Natural killer cell (primary cell): ENCODE measurements at regions of chr15 and their contacts with region 1.

Region 1: GRCh38 chr15:30991255-30992072 is at the start of gene MTMR10:
- DNase-seq: peak; percentile 82 to 83
- ATAC-seq: peak; percentile 94 to 99 (median 95)
- H3K4me3 ChIP-seq: peak within 1 kb of the TSS; percentile 70
- H3K4me3 Mint-ChIP-seq: peak within 1 kb of the TSS; percentile 98
- H3K27ac ChIP-seq: peak within 1 kb of the TSS; percentile 78
- H3K27ac Mint-ChIP-seq: peak within 1 kb of the TSS; percentile 89 to 98
- H3K4me1 ChIP-seq: peaks cover 20% of the 10 kb centered on the region
- H3K4me1 Mint-ChIP-seq: peaks cover 27 to 31% of the 10 kb centered on the region in 2 donors
- H3K27me3 ChIP-seq: no peaks in the 10 kb centered on the region
- H3K27me3 Mint-ChIP-seq: no peaks in the 10 kb centered on the region
- CTCF ChIP-seq: no peak
- total RNA-seq, gene MTMR10: 46.3 to 64.5 (median 54.2) TPM

Region 2: GRCh38 chr15:31049682-31050615 is 58.5 kb after region 1 on chr15:
- intact Hi-C with region 1: loop called (anchors 10 kb)
- DNase-seq: no peak
- ATAC-seq: no peak
- H3K4me3 ChIP-seq: no peak overlapping the region
- H3K4me3 Mint-ChIP-seq: peak overlapping the region; percentile 77
- H3K27ac ChIP-seq: peak overlapping the region; percentile 49
- H3K27ac Mint-ChIP-seq: peak overlapping the region; percentile 29 to 41
- H3K4me1 ChIP-seq: peaks cover 26% of the 10 kb centered on the region
- H3K4me1 Mint-ChIP-seq: peaks cover 23% of the 10 kb centered on the region in 2 donors
- H3K27me3 ChIP-seq: no peaks in the 10 kb centered on the region
- H3K27me3 Mint-ChIP-seq: peaks cover 0 to 6% of the 10 kb centered on the region in 2 donors
- CTCF ChIP-seq: no peak

Region 3: GRCh38 chr15:31080591-31081014 is 89.1 kb after region 1 on chr15:
- intact Hi-C with region 1: loop called (anchors 5 kb)
- DNase-seq: peak; percentile 28 to 41
- ATAC-seq: peak; percentile 63 to 92 (median 91)
- H3K4me3 ChIP-seq: peak overlapping the region; percentile 41
- H3K4me3 Mint-ChIP-seq: peak overlapping the region; percentile 72
- H3K27ac ChIP-seq: no peak overlapping the region
- H3K27ac Mint-ChIP-seq: no peak overlapping the region
- H3K4me1 ChIP-seq: peaks cover 25% of the 10 kb centered on the region
- H3K4me1 Mint-ChIP-seq: peaks cover 20 to 24% of the 10 kb centered on the region in 2 donors
- H3K27me3 ChIP-seq: no peaks in the 10 kb centered on the region
- H3K27me3 Mint-ChIP-seq: peaks cover 0 to 11% of the 10 kb centered on the region in 2 donors
- CTCF ChIP-seq: no peak

Region 4: DNA sequence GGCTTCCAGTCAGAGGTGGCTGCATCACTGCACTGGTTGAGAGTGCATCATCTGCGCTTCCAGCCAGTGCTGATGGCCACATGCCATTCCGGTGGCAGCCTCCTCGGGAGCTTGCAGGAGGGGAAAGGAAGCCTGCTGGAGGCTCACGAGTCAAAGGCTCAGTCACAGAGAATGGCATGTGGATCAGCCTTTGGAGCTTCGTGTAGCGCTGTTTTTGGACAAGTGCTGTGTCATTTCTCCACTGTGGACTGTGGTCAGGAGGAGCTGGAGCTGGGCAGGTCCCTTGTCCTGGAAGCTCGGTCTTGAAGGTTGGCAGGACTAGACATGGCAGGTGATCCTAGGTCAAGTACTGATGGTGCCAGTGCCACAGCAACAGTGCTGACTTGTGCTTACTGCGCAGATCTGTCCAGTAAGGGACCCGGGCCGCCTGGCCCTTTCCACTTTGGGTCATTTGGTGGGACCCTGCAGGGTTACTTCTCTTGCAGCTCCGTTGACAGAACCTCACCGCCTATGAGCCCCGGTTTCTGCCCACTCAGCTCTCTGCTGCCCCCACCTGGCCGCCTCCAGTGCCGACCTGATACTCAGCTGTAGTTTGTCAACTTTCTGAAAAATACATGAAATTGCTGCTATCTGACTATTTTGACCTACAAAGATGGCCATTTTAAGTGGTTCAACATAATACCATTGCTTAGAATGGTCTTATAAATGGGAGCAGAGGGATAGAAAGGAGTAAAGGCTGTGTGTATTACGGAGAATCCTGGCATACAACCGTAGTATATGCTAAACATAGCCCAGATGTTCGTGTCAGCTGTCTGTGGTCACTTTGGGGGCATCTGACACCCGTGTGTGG is 137.7 kb after region 1 on chr15:
- intact Hi-C with region 1: loop called (anchors 5 kb)
- DNase-seq: peak; percentile 79 to 80
- ATAC-seq: peak; percentile 84 to 99 (median 99)
- H3K4me3 ChIP-seq: no peak overlapping the region
- H3K4me3 Mint-ChIP-seq: no peak overlapping the region
- H3K27ac ChIP-seq: no peak overlapping the region
- H3K27ac Mint-ChIP-seq: no peak overlapping the region
- H3K4me1 ChIP-seq: peaks cover 7% of the 10 kb centered on the region
- H3K4me1 Mint-ChIP-seq: peaks cover 14 to 17% of the 10 kb centered on the region in 2 donors
- H3K27me3 ChIP-seq: no peaks in the 10 kb centered on the region
- H3K27me3 Mint-ChIP-seq: peaks cover 0 to 4% of the 10 kb centered on the region in 2 donors
- CTCF ChIP-seq: peak; percentile 97